Posterior vena cava (tissue), 2 donors: ENCODE measurements at regions of chr1 and their contacts with region 1.

Region 1: GRCh38 chr1:101288491-101288944 is 51.7 kb downstream of the S1PR1 start:
- DNase-seq: no peak

Region 2: GRCh38 chr1:100671601-100672000 is 616.9 kb before region 1 on chr1:
- intact Hi-C with region 1: loop called in 1 of 2 experiments (anchors 5 kb)
- DNase-seq: no peak

Region 3: GRCh38 chr1:100921109-100921706 is 367.3 kb before region 1 on chr1:
- intact Hi-C with region 1: loop called (anchors 5 kb)
- DNase-seq: no peak

Region 4: DNA sequence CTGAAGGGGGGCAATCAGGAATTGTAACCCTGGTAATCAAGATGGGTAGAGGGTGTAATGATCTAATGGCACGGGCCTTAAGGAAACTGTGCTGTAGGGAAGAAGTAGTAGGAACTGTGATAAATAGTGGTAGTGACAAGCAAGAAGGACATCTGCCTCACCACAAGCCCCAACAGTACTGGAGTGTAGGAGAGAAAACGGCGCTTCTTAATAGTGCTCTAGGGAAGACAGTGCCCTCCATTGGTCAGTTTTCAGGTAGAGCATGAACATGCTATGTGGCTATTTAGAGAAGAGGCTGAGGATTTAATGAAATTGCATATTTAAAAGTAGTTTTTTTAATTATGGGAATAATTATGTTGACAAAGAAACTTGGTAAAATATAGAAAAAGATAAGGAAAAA is 360.4 kb before region 1 on chr1:
- intact Hi-C with region 1: loop called (anchors 5 kb)
- DNase-seq: no peak

Region 5: GRCh38 chr1:101178688-101179491 is 109.6 kb before region 1 on chr1:
- intact Hi-C with region 1: no loop called
- DNase-seq: no peak